Heart right ventricle (tissue), 16 donors: ENCODE measurements at regions of chr11 and their contacts with region 1.

Region 1: DNA sequence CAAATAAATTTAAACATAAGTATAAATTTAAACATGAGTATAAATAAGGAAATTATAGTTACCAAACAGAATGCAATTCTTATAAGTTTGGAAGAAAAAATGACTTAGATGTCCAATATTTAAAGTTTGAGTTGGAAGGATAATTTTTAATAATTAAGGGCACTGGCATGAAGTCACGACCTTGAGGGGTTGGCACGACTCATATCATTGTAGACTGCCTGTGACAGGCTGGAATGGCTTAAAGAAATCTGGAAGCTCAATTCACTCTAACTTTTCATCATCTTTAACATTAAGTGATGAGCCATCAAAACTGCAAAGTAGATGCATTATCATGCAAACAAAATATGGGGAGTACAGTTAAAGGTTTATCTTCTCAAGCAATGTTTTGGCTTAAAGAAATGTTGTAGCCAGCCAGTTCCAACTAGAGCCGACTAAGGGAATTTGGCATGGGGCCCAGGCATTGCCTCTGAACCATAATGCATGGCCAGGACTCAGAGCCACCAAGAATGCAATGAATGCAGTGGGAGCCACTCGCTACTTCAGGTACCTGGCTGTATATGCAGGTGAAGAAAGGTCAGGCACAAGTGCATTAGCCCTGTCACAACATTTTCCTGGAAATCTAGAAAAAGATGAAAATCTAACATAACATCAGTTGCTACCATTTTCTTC is 33.4 kb downstream of the PGR start:
- DNase-seq: peak; percentile 23 to 56
- ATAC-seq: peak in 6 of 8 donors; percentile 60 to 88 (median 78)
- H3K4me3 ChIP-seq: no peak overlapping the region
- H3K27ac ChIP-seq: peak overlapping the region in 5 of 10 donors; percentile 0 to 37 (median 26)
- H3K4me1 ChIP-seq: peaks cover 0 to 43% (median 14%) of the 10 kb centered on the region in 9 donors
- H3K27me3 ChIP-seq: no peaks in the 10 kb centered on the region
- CTCF ChIP-seq: no peak

Region 2: GRCh38 chr11:101034076-101034475 is 62.1 kb before region 1 on chr11:
- intact Hi-C with region 1: loop called in 1 of 10 experiments (anchors 5 kb)
- DNase-seq: peak; percentile 45 to 84
- ATAC-seq: peak; percentile 92 to 97 (median 96)
- H3K4me3 ChIP-seq: peak overlapping the region in 6 of 10 donors; percentile 9 to 41 (median 34)
- H3K27ac ChIP-seq: peak overlapping the region; percentile 3 to 84 (median 62)
- H3K4me1 ChIP-seq: peaks cover 0 to 20% (median 6%) of the 10 kb centered on the region in 9 donors
- H3K27me3 ChIP-seq: no peaks in the 10 kb centered on the region
- CTCF ChIP-seq: no peak

Region 3: GRCh38 chr11:101049123-101049522 is 47.0 kb before region 1 on chr11:
- intact Hi-C with region 1: no loop called
- DNase-seq: no peak
- ATAC-seq: no peak
- H3K4me3 ChIP-seq: no peak overlapping the region
- H3K27ac ChIP-seq: no peak overlapping the region
- H3K4me1 ChIP-seq: no peaks in the 10 kb centered on the region
- H3K27me3 ChIP-seq: no peaks in the 10 kb centered on the region
- CTCF ChIP-seq: no peak

Region 4: GRCh38 chr11:101860696-101861427 is 764.7 kb after region 1 on chr11:
- intact Hi-C with region 1: loop called in 1 of 10 experiments (anchors 5 kb)
- DNase-seq: peak in 1 of 2 donors; percentile 28
- ATAC-seq: peak; percentile 67 to 97 (median 78)
- H3K4me3 ChIP-seq: no peak overlapping the region
- H3K27ac ChIP-seq: no peak overlapping the region
- H3K4me1 ChIP-seq: peaks cover 0 to 5% (median 0%) of the 10 kb centered on the region in 9 donors
- H3K27me3 ChIP-seq: no peaks in the 10 kb centered on the region
- CTCF ChIP-seq: peak; percentile 52 to 83 (median 74)